Activated B cell treated with CpG ODN at 0.5 μM for 24 hours (primary cell): ENCODE measurements at regions of chr2 and their contacts with region 1.

Region 1: GRCh38 chr2:230614913-230615332 is 97.7 kb upstream of the CAB39 start:
- DNase-seq: peak; percentile 46
- ATAC-seq: peak; percentile 80
- H3K4me3 Mint-ChIP-seq: peak overlapping the region; percentile 64
- H3K27ac Mint-ChIP-seq: peak overlapping the region; percentile 71
- H3K4me1 Mint-ChIP-seq: peaks cover 51% of the 10 kb centered on the region
- H3K27me3 Mint-ChIP-seq: no peaks in the 10 kb centered on the region
- CTCF ChIP-seq: no peak

Region 2: DNA sequence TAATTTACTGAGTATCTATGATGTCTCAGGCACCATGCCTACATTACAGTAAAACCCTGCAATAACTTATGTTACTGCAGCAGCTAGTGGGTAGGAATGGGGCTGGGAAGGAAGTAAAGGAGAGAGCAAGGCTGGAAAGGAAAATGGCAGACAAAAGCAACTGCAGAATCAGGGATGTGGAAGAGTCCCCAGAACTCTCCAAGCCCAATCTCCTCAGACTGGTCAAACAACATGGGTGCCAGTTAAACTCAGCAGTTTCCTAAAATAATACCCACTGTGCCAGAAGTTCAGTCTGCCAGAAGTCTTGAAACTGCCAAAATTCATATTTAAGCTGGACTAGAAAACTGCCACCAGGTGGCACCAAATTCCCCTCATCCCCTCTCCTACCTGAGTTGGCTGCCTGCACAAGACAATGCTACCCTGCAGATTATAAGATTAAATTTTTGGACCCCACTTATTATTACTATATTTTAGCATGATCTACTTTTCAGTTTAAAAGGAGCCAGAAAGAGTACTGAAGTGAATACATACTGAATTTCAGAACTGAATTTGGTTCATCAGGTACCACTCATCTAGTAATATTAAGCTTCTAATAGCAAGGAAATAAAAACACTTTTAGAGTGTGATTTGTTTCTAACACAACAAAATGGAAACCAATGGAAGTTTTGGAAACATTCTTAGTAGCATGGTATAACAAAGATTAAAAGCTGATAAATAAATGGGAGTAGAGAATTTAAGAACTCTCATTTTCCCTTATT is 813.7 kb before region 1 on chr2:
- CTCF ChIA-PET with region 1: interaction called, 3 read pairs
- POLR2A ChIA-PET with region 1: no interaction called
- intact Hi-C with region 1: loop called (anchors 1 kb)
- DNase-seq: peak; percentile 35
- ATAC-seq: peak; percentile 58
- H3K4me3 Mint-ChIP-seq: no peak overlapping the region
- H3K27ac Mint-ChIP-seq: no peak overlapping the region
- H3K4me1 Mint-ChIP-seq: no peaks in the 10 kb centered on the region
- H3K27me3 Mint-ChIP-seq: no peaks in the 10 kb centered on the region
- CTCF ChIP-seq: no peak

Region 3: GRCh38 chr2:230202430-230203109 is 412.4 kb before region 1 on chr2:
- CTCF ChIA-PET with region 1: interaction called, 13 read pairs
- POLR2A ChIA-PET with region 1: interaction called, 19 read pairs
- intact Hi-C with region 1: loop called (anchors 1 kb)
- DNase-seq: peak; percentile 39
- ATAC-seq: peak; percentile 70
- H3K4me3 Mint-ChIP-seq: peak overlapping the region; percentile 76
- H3K27ac Mint-ChIP-seq: peak overlapping the region; percentile 87
- H3K4me1 Mint-ChIP-seq: peaks cover 42% of the 10 kb centered on the region
- H3K27me3 Mint-ChIP-seq: no peaks in the 10 kb centered on the region
- CTCF ChIP-seq: no peak

Region 4: GRCh38 chr2:230447455-230448451 is 167.2 kb before region 1 on chr2:
- CTCF ChIA-PET with region 1: interaction called, 5 read pairs
- POLR2A ChIA-PET with region 1: interaction called, 12 read pairs
- intact Hi-C with region 1: loop called (anchors 1 kb)
- DNase-seq: no peak
- ATAC-seq: peak; percentile 81
- H3K4me3 Mint-ChIP-seq: peak overlapping the region; percentile 83
- H3K27ac Mint-ChIP-seq: peak overlapping the region; percentile 99
- H3K4me1 Mint-ChIP-seq: peaks cover 93% of the 10 kb centered on the region
- H3K27me3 Mint-ChIP-seq: no peaks in the 10 kb centered on the region
- CTCF ChIP-seq: no peak

Region 5: GRCh38 chr2:230564805-230565779 is 49.8 kb before region 1 on chr2:
- CTCF ChIA-PET with region 1: no interaction called
- POLR2A ChIA-PET with region 1: no interaction called
- intact Hi-C with region 1: loop called (anchors 2 kb)
- DNase-seq: no peak
- ATAC-seq: peak; percentile 91
- H3K4me3 Mint-ChIP-seq: peak overlapping the region; percentile 47
- H3K27ac Mint-ChIP-seq: peak overlapping the region; percentile 78
- H3K4me1 Mint-ChIP-seq: peaks cover 41% of the 10 kb centered on the region
- H3K27me3 Mint-ChIP-seq: no peaks in the 10 kb centered on the region
- CTCF ChIP-seq: no peak

Region 6: DNA sequence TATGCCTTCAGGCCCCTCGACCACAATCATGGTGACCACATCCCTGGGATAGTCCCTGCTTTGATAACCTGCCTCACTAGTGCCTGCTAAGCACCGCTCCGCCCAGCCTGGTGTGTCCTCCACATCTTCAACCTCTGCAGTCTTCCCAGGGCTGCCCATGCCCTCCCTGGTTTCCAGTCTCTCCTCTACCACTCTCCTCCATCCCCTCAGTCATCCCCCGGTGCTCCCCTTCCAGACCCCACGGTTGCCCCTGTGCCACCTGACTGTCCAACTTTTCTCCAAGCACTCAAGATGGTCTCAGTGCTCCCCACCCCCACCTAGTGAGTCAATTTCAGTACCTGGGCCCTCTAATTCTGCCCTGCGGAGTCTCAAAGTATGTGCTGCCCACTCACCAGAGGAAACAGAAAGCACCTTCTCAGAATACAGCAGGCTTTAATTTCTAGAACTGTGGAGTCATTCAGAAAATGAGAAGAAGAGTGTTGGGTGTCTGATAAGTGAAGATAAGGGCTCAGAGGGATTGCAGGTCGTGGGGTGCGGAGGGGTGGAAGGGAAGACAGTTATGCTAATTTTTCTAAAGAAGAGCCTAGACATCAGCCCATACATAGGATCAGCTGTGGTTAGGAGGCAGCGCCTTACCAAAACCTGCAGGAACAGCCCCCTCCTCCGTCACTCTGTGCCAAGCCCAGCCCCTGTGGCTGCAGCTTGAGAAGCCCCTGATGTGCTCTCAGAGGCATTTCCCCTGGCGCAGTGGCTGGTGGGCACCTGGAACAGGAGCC is 44.1 kb after region 1 on chr2:
- CTCF ChIA-PET with region 1: interaction called, 3 read pairs
- POLR2A ChIA-PET with region 1: interaction called, 10 read pairs
- intact Hi-C with region 1: no loop called
- DNase-seq: no peak
- ATAC-seq: peak; percentile 20
- H3K4me3 Mint-ChIP-seq: peak overlapping the region; percentile 5
- H3K27ac Mint-ChIP-seq: peak overlapping the region; percentile 42
- H3K4me1 Mint-ChIP-seq: peaks cover 74% of the 10 kb centered on the region
- H3K27me3 Mint-ChIP-seq: no peaks in the 10 kb centered on the region
- CTCF ChIP-seq: no peak

Region 7: GRCh38 chr2:230790981-230791380 is 176.1 kb after region 1 on chr2:
- CTCF ChIA-PET with region 1: no interaction called
- POLR2A ChIA-PET with region 1: no interaction called
- intact Hi-C with region 1: no loop called
- DNase-seq: no peak
- ATAC-seq: no peak
- H3K4me3 Mint-ChIP-seq: no peak overlapping the region
- H3K27ac Mint-ChIP-seq: peak overlapping the region; percentile 30
- H3K4me1 Mint-ChIP-seq: peaks cover 27% of the 10 kb centered on the region
- H3K27me3 Mint-ChIP-seq: no peaks in the 10 kb centered on the region
- CTCF ChIP-seq: no peak